GM18951 (cell line): ENCODE measurements at regions of chr18 and their contacts with region 1.

Region 1: DNA sequence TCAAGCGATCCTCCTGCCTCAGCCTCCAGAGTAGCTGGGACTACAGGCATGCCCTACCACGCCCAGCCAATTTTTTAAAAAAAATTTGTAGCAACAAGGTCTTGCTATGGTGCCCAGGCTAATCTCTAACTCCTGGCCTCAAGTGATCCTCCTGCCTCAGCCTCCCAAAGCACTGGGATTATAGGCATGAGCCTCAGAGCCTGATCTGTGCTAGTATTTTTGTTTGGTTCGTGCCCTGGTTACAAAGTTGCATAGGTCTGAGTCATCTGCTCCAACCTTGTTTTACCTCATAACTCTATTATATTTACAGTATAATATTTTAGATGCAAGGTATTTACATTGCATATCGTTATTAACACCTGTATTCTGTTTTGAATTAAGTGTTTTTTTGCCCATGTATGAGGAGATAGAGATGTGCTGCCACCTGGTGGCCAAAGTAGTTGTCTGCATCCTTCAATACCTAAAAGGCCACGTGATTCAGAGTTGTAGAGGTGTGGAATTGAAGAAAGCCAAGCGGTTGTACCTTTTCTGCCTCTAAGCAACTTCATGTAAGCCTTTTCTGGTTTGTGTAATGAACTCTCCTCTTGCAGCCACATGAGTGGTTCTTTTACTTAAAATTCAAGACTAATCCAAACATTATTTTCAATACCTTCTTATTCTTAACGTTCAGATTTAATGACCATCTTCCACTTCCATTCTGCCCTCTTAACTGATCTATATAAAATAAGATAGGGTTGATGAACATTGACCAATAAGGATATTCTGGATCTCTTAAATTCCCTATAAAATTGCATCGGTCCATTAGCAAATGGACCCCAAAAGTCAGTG is 19.9 kb upstream of the CABYR start:
- POLR2A ChIP-seq: no peak

Region 2: GRCh38 chr18:22674272-22674671 is 1444.7 kb before region 1 on chr18:
- in situ Hi-C with region 1: no loop called
- POLR2A ChIP-seq: no peak

Region 3: DNA sequence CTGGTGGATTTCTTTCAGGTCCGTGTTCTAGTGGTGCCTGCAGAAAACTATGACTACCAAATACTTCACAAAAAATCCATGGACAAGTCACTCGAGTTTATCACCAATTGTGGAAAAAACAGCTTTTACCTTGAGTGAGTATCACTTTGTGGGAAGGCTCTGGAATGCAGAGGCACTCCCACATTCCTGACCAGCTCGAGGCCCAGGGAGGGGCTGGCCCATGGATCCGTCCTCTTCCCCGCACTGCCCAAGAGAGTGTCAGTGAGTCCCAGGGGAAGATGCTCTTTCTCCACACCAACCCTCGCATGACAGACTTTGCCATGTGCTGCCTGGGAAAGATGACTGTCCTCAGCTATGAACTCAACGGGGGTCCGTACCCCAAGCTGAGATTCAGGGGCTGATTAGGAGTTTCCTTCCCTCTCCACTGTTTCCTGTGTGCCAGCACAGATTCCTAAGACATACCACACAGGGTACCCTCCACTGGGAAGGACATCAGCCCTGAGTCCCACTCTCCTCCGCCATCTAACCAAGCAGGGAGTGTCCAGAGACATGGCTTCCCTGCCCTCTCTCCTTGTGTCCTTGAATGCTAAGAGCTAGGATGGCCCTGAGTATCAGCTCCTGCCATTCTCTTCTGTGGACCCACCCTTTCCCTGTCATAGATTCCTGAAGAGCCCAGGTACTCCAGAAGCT is 273.8 kb before region 1 on chr18:
- in situ Hi-C with region 1: loop called (anchors 10 kb)
- POLR2A ChIP-seq: no peak